Tibial artery (tissue), 4 donors: ENCODE measurements at regions of chr13 and their contacts with region 1.

Region 1: DNA sequence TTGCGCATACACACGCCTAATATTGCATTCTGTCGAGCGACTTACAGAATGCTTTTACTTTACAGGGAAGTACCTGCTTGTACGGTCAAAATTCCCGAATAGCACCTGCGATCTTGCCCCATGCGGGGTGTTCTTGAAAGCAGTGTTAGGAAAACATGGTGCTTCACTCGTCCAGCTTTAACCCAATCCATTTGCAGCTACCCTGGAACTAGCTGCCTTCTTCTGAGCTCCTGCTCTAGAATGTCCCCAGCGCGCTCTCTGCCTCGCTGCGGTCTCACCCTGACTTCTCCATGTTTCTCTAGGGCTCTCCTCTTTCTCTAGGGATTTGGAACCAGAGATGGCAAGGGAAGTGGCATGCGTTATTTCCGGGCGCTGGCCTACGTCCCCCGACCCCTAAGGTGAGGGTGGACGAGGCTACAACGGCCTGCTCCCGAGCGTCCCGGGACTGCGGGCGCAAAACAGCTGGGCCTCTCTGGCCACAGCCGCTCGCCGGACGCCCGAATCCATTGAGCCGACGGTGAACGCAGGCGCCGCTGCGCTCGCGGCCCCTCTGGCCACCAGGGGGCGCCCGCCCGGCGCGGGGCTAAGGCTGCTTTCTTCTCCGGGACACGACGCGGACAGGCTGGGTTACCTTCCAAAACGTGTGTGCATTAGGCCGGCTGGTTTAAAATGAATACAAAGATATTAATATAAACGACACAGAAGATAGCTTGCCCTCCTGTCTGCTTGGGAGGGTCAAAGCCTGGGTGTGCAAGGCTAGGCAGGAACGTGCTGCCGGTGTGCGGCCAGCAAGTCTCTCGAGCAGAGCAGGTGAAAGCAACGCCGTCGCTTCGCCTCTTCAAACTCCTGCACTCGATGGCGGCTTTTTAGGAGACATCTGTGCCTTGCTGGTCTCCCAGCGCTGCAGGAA is 1.8 kb upstream of the SPRY2 start:
- DNase-seq: peak; percentile 80 to 91
- H3K4me3 ChIP-seq: peak overlapping the region; percentile 77 to 80
- H3K27ac ChIP-seq: peak overlapping the region; percentile 89 to 93
- H3K4me1 ChIP-seq: peaks cover 0 to 18% (median 2%) of the 10 kb centered on the region in 4 donors
- H3K27me3 ChIP-seq: no peaks in the 10 kb centered on the region
- CTCF ChIP-seq: peak; percentile 91 to 98

Region 2: GRCh38 chr13:79679334-79679733 is 663.4 kb before region 1 on chr13:
- intact Hi-C with region 1: loop called (anchors 10 kb)
- DNase-seq: peak; percentile 73
- H3K4me3 ChIP-seq: no peak overlapping the region
- H3K27ac ChIP-seq: no peak overlapping the region
- H3K4me1 ChIP-seq: peaks cover 0 to 3% (median 0%) of the 10 kb centered on the region in 4 donors
- H3K27me3 ChIP-seq: no peaks in the 10 kb centered on the region
- CTCF ChIP-seq: peak; percentile 59 to 61

Region 3: GRCh38 chr13:80048802-80049201 is 293.9 kb before region 1 on chr13:
- intact Hi-C with region 1: loop called (anchors 10 kb)
- DNase-seq: peak; percentile 93 to 96
- H3K4me3 ChIP-seq: no peak overlapping the region
- H3K27ac ChIP-seq: peak overlapping the region; percentile 58 to 62
- H3K4me1 ChIP-seq: peaks cover 0 to 33% (median 18%) of the 10 kb centered on the region in 4 donors
- H3K27me3 ChIP-seq: no peaks in the 10 kb centered on the region
- CTCF ChIP-seq: no peak

Region 4: DNA sequence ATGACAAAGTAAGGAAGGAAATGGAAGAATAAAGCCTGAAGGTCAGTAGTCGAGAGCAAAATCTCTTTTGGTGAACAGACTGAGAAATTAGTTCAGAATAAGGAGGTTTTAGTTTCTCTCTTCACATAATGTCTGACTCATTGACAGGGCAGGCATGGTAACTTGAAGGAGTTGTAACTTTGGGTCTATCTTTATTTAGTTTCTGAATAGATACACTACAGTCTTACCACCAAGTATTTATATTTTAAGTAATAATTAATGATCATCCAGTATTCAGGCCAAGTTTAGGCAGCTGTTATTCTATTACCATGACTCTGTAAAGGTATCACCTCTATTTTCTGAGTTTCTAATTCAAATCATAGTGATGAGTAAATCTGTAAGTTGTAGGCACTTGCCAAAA is 221.7 kb before region 1 on chr13:
- intact Hi-C with region 1: loop called (anchors 10 kb)
- DNase-seq: no peak
- H3K4me3 ChIP-seq: no peak overlapping the region
- H3K27ac ChIP-seq: no peak overlapping the region
- H3K4me1 ChIP-seq: no peaks in the 10 kb centered on the region
- H3K27me3 ChIP-seq: no peaks in the 10 kb centered on the region
- CTCF ChIP-seq: no peak

Region 5: GRCh38 chr13:80290591-80290990 is 52.1 kb before region 1 on chr13:
- intact Hi-C with region 1: no loop called
- DNase-seq: no peak
- H3K4me3 ChIP-seq: no peak overlapping the region
- H3K27ac ChIP-seq: no peak overlapping the region
- H3K4me1 ChIP-seq: no peaks in the 10 kb centered on the region
- H3K27me3 ChIP-seq: no peaks in the 10 kb centered on the region
- CTCF ChIP-seq: no peak

Region 6: GRCh38 chr13:80840316-80840976 is 497.7 kb after region 1 on chr13:
- intact Hi-C with region 1: loop called (anchors 5 kb)
- DNase-seq: peak in 1 of 2 donors; percentile 30
- H3K4me3 ChIP-seq: no peak overlapping the region
- H3K27ac ChIP-seq: no peak overlapping the region
- H3K4me1 ChIP-seq: no peaks in the 10 kb centered on the region
- H3K27me3 ChIP-seq: no peaks in the 10 kb centered on the region
- CTCF ChIP-seq: no peak